ENCODE measurements at regions of chr2 and their contacts with region 1.

Region 1: GRCh38 chr2:165417009-165417408 is 52.5 kb upstream of the CSRNP3 start:
- DNase-seq: no peak
- CTCF ChIP-seq: no peak

Region 2: DNA sequence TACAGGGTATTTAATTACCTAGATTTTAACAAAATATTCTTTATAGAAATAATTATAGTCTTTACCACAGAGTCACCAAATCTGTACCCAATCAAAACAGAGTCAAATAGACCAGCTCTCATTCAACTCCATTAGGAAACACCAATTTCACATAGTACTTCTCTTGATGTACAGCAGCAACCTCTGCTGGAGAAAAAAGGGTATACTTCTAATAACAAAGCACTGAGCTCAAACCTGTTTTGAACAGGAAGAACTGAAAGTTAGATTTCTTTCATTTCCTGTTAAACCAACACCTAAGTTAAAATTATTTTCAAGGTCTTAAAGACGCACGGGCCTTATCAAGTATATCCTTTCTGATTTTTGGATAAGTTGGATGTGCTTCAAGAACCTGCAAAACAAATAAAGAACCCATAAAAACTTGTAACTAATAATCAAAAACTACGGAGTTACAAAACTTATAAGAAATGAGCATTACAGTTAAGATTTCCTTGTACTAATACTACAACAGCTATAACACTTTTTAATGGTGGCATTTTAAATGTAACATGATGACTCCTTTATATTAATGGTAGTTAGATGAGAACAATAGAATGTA is 457.5 kb after region 1 on chr2:
- in situ Hi-C with region 1: loop called (anchors 10 kb)
- DNase-seq: peak; percentile 52
- CTCF ChIP-seq: peak; percentile 62